Activated naive CD4-positive, alpha-beta T cell treated with anti-CD3 and anti-CD28 coated beads for 36 hours (primary cell): ENCODE measurements at regions of chr12 and their contacts with region 1.

Region 1: GRCh38 chr12:67161322-67161918 is 107.7 kb upstream of the CAND1 start:
- DNase-seq: peak; percentile 70
- H3K4me3 Mint-ChIP-seq: no peak overlapping the region
- H3K27ac Mint-ChIP-seq: no peak overlapping the region
- H3K4me1 Mint-ChIP-seq: no peaks in the 10 kb centered on the region
- H3K27me3 Mint-ChIP-seq: no peaks in the 10 kb centered on the region

Region 2: GRCh38 chr12:67441736-67442346 is 280.4 kb after region 1 on chr12:
- CTCF ChIA-PET with region 1: interaction called, 3 read pairs
- intact Hi-C with region 1: loop called (anchors 2 kb)
- DNase-seq: peak; percentile 93
- H3K4me3 Mint-ChIP-seq: peak overlapping the region; percentile 7
- H3K27ac Mint-ChIP-seq: no peak overlapping the region
- H3K4me1 Mint-ChIP-seq: peaks cover 19% of the 10 kb centered on the region
- H3K27me3 Mint-ChIP-seq: no peaks in the 10 kb centered on the region

Region 3: DNA sequence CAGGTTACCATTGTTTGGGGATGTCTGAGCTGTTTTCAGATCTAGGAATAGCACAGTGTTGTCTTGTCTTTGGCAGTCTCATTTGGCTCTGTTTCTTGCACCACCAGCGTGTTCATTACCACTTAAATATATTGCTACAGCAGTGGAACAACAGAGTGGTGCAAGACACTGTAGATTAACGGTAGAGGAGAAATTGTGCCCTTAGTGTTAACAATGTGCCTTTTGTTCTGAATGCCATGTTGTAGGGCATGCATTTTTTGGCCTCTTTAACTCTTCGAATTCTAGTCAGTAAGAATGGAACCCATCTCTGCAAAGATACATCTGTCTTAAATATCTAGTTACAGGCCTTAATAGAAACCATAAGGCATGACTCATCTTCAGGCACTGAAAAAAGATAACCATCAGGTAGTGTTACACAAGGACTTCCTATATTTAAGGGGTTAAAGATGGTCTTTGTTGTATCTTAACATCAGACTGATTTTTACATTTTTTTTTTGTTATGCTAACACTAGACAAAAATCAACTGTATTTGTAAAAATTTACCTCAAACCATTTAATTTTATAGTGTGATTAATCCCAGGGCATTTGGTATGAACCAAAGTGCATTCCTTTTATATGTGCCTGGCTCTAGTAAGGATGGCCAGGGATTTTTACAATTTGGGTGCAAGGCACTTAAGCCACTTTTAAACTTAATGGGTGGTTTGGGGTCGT is 500.0 kb after region 1 on chr12:
- CTCF ChIA-PET with region 1: no interaction called
- intact Hi-C with region 1: loop called (anchors 5 kb)
- DNase-seq: no peak
- H3K4me3 Mint-ChIP-seq: no peak overlapping the region
- H3K27ac Mint-ChIP-seq: no peak overlapping the region
- H3K4me1 Mint-ChIP-seq: peaks cover 68% of the 10 kb centered on the region
- H3K27me3 Mint-ChIP-seq: no peaks in the 10 kb centered on the region